Colonic mucosa (tissue), 4 donors: ENCODE measurements at regions of chr7 and their contacts with region 1.

Region 1: GRCh38 chr7:125059861-125060456 is 130.3 kb upstream of the POT1 start:
- DNase-seq: no peak
- H3K4me3 ChIP-seq: no peak overlapping the region
- H3K27ac ChIP-seq: no peak overlapping the region
- H3K4me1 ChIP-seq: no peaks in the 10 kb centered on the region
- H3K27me3 ChIP-seq: no peaks in the 10 kb centered on the region
- CTCF ChIP-seq: no peak

Region 2: GRCh38 chr7:125670926-125671572 is 611.1 kb after region 1 on chr7:
- intact Hi-C with region 1: loop called (anchors 5 kb)
- DNase-seq: no peak
- H3K4me3 ChIP-seq: no peak overlapping the region
- H3K27ac ChIP-seq: no peak overlapping the region
- H3K4me1 ChIP-seq: no peaks in the 10 kb centered on the region
- H3K27me3 ChIP-seq: no peaks in the 10 kb centered on the region
- CTCF ChIP-seq: peak; percentile 17